ENCODE measurements at regions of chr15 and their contacts with region 1.

Region 1: DNA sequence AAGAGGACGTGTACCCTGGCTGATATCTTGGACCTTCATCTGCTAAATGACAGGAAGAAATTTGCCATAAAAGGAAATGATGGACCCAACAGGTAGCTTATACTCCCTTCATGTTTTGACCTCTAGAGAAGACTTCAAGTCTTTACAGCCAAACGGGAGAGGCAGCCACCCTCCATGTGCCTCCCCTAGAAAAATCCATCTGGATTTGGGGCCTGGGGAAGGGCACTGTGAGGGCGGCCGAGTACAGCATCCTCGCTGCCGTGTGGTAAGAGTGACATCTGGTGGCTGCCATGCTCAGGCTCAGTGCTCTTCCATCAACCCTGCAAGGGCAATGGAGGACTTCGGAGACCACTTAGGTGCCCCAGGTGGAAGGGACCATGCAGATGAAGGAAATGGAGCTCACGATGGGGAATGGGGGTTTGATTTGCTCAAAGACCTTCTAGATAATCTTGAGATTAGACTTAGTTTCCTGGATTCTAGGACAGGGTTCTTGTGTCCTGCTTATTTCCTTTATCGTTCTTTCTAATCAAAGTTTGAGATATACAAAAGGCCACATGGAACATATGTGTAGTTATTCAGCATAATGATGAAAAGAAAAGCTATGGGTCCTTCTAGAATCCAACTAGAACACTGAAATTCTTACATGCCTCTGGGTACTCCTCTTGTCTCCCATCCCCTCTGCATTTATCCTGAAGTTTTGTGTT is 44.4 kb downstream of the AQP9 start:
- DNase-seq: peak; percentile 71
- H3K4me3 Mint-ChIP-seq: no peak overlapping the region
- H3K27ac Mint-ChIP-seq: no peak overlapping the region
- H3K4me1 Mint-ChIP-seq: no peaks in the 10 kb centered on the region
- H3K27me3 Mint-ChIP-seq: peaks cover 36% of the 10 kb centered on the region
- CTCF ChIP-seq: peak; percentile 93

Region 2: GRCh38 chr15:57751177-57751800 is 431.3 kb before region 1 on chr15:
- CTCF ChIA-PET with region 1: interaction called, 5 read pairs
- intact Hi-C with region 1: loop called (anchors 1 kb)
- DNase-seq: peak; percentile 37
- H3K4me3 Mint-ChIP-seq: no peak overlapping the region
- H3K27ac Mint-ChIP-seq: no peak overlapping the region
- H3K4me1 Mint-ChIP-seq: no peaks in the 10 kb centered on the region
- H3K27me3 Mint-ChIP-seq: no peaks in the 10 kb centered on the region
- CTCF ChIP-seq: peak; percentile 40

Region 3: GRCh38 chr15:57866149-57866736 is 316.4 kb before region 1 on chr15:
- CTCF ChIA-PET with region 1: no interaction called
- intact Hi-C with region 1: loop called (anchors 1 kb)
- DNase-seq: peak; percentile 86
- H3K4me3 Mint-ChIP-seq: no peak overlapping the region
- H3K27ac Mint-ChIP-seq: no peak overlapping the region
- H3K4me1 Mint-ChIP-seq: peaks cover 8% of the 10 kb centered on the region
- H3K27me3 Mint-ChIP-seq: no peaks in the 10 kb centered on the region
- CTCF ChIP-seq: peak; percentile 93

Region 4: GRCh38 chr15:58077427-58077826 is 105.2 kb before region 1 on chr15:
- CTCF ChIA-PET with region 1: interaction called, 25 read pairs
- intact Hi-C with region 1: loop called (anchors 1 kb)
- DNase-seq: peak; percentile 19
- H3K4me3 Mint-ChIP-seq: no peak overlapping the region
- H3K27ac Mint-ChIP-seq: no peak overlapping the region
- H3K4me1 Mint-ChIP-seq: peaks cover 9% of the 10 kb centered on the region
- H3K27me3 Mint-ChIP-seq: peaks cover 4% of the 10 kb centered on the region
- CTCF ChIP-seq: peak; percentile 39

Region 5: GRCh38 chr15:58115692-58116091 is 66.9 kb before region 1 on chr15:
- CTCF ChIA-PET with region 1: no interaction called
- intact Hi-C with region 1: loop called (anchors 1 kb)
- DNase-seq: no peak
- H3K4me3 Mint-ChIP-seq: no peak overlapping the region
- H3K27ac Mint-ChIP-seq: no peak overlapping the region
- H3K4me1 Mint-ChIP-seq: no peaks in the 10 kb centered on the region
- H3K27me3 Mint-ChIP-seq: peaks cover 11% of the 10 kb centered on the region
- CTCF ChIP-seq: peak; percentile 35

Measured in Calu3 (cell line).